ENCODE measurements at regions of chr5 and their contacts with region 1.

Region 1: GRCh38 chr5:36459176-36460135 is 146.9 kb upstream of the SLC1A3 start:
- DNase-seq: no peak
- H3K4me3 ChIP-seq: no peak overlapping the region
- H3K27ac ChIP-seq: no peak overlapping the region
- H3K4me1 ChIP-seq: no peaks in the 10 kb centered on the region
- H3K27me3 ChIP-seq: no peaks in the 10 kb centered on the region
- CTCF ChIP-seq: peak; percentile 34 to 79 (median 77)
- EP300 ChIP-seq: no peak
- POLR2A ChIP-seq: no peak
- RAD21 ChIP-seq: peak; percentile 60 to 66

Region 2: DNA sequence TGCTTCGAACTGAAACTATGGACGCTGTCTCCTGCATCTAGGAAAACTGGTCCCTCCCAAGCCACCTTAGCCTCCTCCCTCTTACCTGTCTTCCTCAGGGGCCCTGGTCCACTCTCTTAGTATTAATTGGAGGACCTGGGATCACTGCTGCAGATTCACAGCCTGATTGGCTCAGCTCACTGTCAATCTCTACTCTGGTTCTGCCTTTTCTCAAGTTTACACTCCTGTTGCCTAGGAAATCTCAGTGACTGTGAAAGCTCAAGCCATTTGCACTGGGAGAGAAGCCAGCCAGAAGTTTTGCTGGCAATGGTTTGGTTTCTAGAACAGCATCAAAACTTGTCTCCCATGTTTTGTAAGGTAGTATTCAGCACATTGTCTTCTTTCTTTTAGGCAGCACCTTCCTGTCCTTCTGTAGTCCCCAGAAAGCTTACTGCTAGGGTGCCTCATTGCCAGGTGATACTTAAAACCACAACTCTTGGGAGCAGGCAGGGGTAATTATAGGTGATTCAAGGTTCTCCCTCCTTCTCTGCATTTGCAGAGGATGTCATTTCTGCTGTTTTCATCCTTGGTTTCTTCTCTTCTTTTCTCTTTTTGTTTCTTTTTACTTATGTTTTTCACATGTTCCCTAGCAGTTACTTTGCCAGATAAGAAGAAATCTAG is 520.8 kb before region 1 on chr5 and contains the start of gene CAPSL:
- CTCF ChIA-PET with region 1: no interaction called
- POLR2A ChIA-PET with region 1: no interaction called
- DNase-seq: peak; percentile 70 to 79
- H3K4me3 ChIP-seq: no peak within 1 kb of the TSS
- H3K27ac ChIP-seq: no peak within 1 kb of the TSS
- H3K4me1 ChIP-seq: no peaks in the 10 kb centered on the region
- H3K27me3 ChIP-seq: no peaks in the 10 kb centered on the region; a peak in 1 of 7 replicates
- CTCF ChIP-seq: no peak
- EP300 ChIP-seq: no peak
- POLR2A ChIP-seq: no peak
- RAD21 ChIP-seq: no peak
- total RNA-seq, gene CAPSL: not detected in 2 replicates

Region 3: DNA sequence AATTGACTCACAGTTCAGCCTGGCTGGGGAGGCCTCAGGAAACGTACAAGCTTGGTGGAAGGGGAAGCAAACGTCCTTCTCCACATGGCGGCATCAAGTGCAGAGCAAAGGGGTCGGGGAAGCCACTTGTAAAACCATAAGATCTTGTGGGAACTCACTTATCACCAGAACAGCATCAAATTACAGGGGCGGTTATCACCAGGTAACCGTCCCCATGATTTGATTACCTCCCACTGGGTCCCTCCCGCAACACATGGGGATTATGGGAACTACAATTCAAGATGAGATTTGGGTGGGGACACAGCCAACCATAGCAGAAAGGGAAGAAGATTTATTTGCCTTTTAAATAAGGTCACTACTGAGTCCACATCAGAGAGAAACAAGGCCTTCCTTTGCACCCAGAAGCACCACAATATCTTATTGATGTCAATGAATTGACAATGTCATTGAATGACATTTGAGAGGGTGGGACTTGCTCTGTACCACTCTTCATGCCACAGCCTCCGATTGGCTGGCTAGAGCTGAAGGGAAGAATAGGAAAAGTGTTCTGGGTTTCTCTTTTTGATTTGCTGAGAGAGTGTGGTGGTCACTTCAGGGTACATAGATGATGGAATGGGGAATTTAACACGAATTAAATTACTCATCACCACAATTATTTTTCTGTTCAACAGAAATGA is 296.5 kb before region 1 on chr5:
- CTCF ChIA-PET with region 1: no interaction called
- POLR2A ChIA-PET with region 1: no interaction called
- DNase-seq: no peak
- H3K4me3 ChIP-seq: no peak overlapping the region
- H3K27ac ChIP-seq: no peak overlapping the region
- H3K4me1 ChIP-seq: no peaks in the 10 kb centered on the region
- H3K27me3 ChIP-seq: no peaks in the 10 kb centered on the region
- CTCF ChIP-seq: no peak
- EP300 ChIP-seq: no peak
- POLR2A ChIP-seq: no peak
- RAD21 ChIP-seq: no peak

Region 4: GRCh38 chr5:36414869-36415282 is 44.6 kb before region 1 on chr5:
- CTCF ChIA-PET with region 1: interaction called, 19 read pairs
- POLR2A ChIA-PET with region 1: no interaction called
- DNase-seq: no peak
- H3K4me3 ChIP-seq: no peak overlapping the region
- H3K27ac ChIP-seq: no peak overlapping the region
- H3K4me1 ChIP-seq: peaks cover 4 to 17% (median 8%) of the 10 kb centered on the region in 4 experiments; a peak in 5 of 7 replicates
- H3K27me3 ChIP-seq: peaks cover 6 to 36% (median 24%) of the 10 kb centered on the region in 4 experiments; a peak in 6 of 7 replicates
- CTCF ChIP-seq: peak in 1 of 3 experiments; percentile 48; a peak in 1 of 4 replicates
- EP300 ChIP-seq: no peak
- POLR2A ChIP-seq: no peak
- RAD21 ChIP-seq: peak; percentile 56 to 70

Region 5: GRCh38 chr5:36436306-36436705 is 23.1 kb before region 1 on chr5:
- CTCF ChIA-PET with region 1: interaction called, 24 read pairs
- POLR2A ChIA-PET with region 1: no interaction called
- DNase-seq: no peak
- H3K4me3 ChIP-seq: no peak overlapping the region
- H3K27ac ChIP-seq: no peak overlapping the region
- H3K4me1 ChIP-seq: no peaks in the 10 kb centered on the region
- H3K27me3 ChIP-seq: peaks cover 0 to 1% (median 0%) of the 10 kb centered on the region in 4 experiments; a peak in 1 of 7 replicates
- CTCF ChIP-seq: no peak
- EP300 ChIP-seq: no peak
- POLR2A ChIP-seq: no peak
- RAD21 ChIP-seq: no peak

Region 6: DNA sequence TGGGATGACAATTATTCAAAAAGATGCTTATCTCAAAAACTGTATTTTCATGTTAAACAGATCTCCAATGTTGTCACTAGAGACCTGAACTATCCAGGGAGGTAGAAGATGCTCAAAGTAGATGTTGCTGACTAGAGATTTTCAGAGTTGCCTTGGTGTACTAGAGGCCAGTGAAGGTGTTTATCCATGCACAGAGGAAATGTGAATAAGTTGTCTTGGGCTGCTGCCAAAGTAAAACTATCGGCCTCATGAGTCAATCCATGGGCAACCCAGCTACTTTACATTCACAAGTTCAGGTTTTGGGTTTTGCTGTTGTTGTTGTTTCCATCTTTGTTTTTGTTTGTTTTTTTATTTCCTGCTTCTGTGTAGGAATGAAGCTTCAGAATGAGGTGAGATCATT is 16.7 kb before region 1 on chr5:
- CTCF ChIA-PET with region 1: interaction called, 39 read pairs
- POLR2A ChIA-PET with region 1: no interaction called
- DNase-seq: no peak
- H3K4me3 ChIP-seq: no peak overlapping the region
- H3K27ac ChIP-seq: no peak overlapping the region
- H3K4me1 ChIP-seq: peaks cover 0 to 5% (median under 1%) of the 10 kb centered on the region in 4 experiments; a peak in 3 of 7 replicates
- H3K27me3 ChIP-seq: peaks cover 0 to 1% (median 0%) of the 10 kb centered on the region in 4 experiments; a peak in 1 of 7 replicates
- CTCF ChIP-seq: no peak
- EP300 ChIP-seq: no peak
- POLR2A ChIP-seq: no peak
- RAD21 ChIP-seq: no peak

Region 7: DNA sequence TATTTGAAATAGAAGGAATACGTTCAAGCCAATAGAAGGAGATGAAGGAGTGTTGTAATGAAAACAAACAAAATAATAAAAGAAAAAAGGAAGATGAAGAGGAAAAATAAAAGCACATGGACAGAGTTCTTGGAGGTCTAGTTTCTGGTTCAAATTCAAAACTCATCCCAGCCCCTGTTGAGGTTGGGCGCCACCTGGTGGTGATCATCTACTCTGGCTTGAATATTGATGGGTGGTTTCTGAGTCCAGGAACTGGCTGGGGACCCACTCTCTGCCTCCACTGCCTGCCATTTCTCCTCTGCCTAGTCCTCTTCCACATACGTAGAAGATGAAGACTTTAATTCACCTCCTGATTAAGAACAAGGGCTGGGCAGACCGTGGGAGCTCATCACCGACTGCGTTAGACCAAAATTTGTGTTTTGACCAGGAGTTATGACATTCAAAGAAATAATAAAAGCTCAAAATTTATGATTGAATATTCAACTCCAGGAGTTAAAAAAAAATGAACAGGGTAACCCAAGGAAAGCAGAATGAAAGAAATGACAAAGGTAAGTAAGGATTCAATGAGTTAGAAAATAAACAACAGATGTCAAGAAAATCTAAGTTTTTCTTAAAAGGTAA is 48.0 kb after region 1 on chr5:
- CTCF ChIA-PET with region 1: interaction called, 30 read pairs
- POLR2A ChIA-PET with region 1: no interaction called
- DNase-seq: peak in 1 of 2 experiments; percentile 91
- H3K4me3 ChIP-seq: no peak overlapping the region
- H3K27ac ChIP-seq: no peak overlapping the region
- H3K4me1 ChIP-seq: no peaks in the 10 kb centered on the region
- H3K27me3 ChIP-seq: no peaks in the 10 kb centered on the region
- CTCF ChIP-seq: peak; percentile 68 to 81 (median 81)
- EP300 ChIP-seq: no peak
- POLR2A ChIP-seq: no peak
- RAD21 ChIP-seq: peak; percentile 75 to 82